ENCODE measurements at regions of chr1 and their contacts with region 1.

Region 1: GRCh38 chr1:155410931-155411330 is 90.2 kb downstream of the RUSC1 start:
- DNase-seq: no peak
- H3K27ac ChIP-seq: no peak overlapping the region
- CTCF ChIP-seq: no peak

Region 2: DNA sequence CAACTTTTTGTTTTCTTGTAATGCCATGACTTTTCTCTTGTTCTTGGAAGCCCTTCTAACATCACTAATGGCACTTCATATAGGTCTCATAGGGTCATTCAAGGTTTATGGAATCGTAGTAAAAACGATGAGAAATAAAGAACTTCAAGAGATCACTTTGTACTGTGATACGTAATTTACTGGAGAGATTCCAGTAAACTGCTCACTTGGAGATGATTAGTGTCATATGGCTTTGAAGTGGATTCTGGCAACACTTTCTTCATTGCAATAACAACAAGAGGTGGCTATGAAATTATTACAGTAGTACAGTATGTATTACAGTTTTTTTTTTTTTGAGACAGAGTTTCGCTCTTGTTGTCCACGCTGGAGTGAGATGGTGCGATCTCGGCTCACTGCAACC is 13.2 kb after region 1 on chr1:
- CTCF ChIA-PET with region 1: no interaction called
- POLR2A ChIA-PET with region 1: no interaction called
- DNase-seq: no peak
- H3K27ac ChIP-seq: no peak overlapping the region
- CTCF ChIP-seq: no peak

Region 3: GRCh38 chr1:155809088-155809487 is 398.2 kb after region 1 on chr1:
- CTCF ChIA-PET with region 1: no interaction called
- POLR2A ChIA-PET with region 1: interaction called, 10 read pairs
- DNase-seq: no peak
- H3K27ac ChIP-seq: no peak overlapping the region
- CTCF ChIP-seq: no peak

Measured in RWPE1 (cell line).